HCT116 (cell line): ENCODE measurements at regions of chr22 and their contacts with region 1.

Region 1: GRCh38 chr22:44080936-44081861 is 57.1 kb downstream of the PARVB start:
- DNase-seq: peak; percentile 29
- ATAC-seq: peak; percentile 77
- H3K4me3 ChIP-seq: no peak overlapping the region
- H3K27ac ChIP-seq: no peak overlapping the region
- H3K4me1 ChIP-seq: no peaks in the 10 kb centered on the region; a peak in 1 of 4 replicates
- H3K27me3 ChIP-seq: no peaks in the 10 kb centered on the region
- CTCF ChIP-seq: peak; percentile 46 to 93 (median 91); a peak in 5 of 6 replicates
- POLR2A ChIP-seq: no peak
- RAD21 ChIP-seq: peak; percentile 66

Region 2: GRCh38 chr22:43600265-43600664 is 480.9 kb before region 1 on chr22:
- CTCF ChIA-PET with region 1: no interaction called
- POLR2A ChIA-PET with region 1: no interaction called
- RAD21 ChIA-PET with region 1: no interaction called
- intact Hi-C with region 1: no loop called
- DNase-seq: no peak
- ATAC-seq: no peak
- H3K4me3 ChIP-seq: no peak overlapping the region
- H3K27ac ChIP-seq: no peak overlapping the region
- H3K4me1 ChIP-seq: no peaks in the 10 kb centered on the region
- H3K27me3 ChIP-seq: peaks cover 48% of the 10 kb centered on the region; the same call in 1 of the 2 replicates
- CTCF ChIP-seq: no peak
- POLR2A ChIP-seq: no peak
- RAD21 ChIP-seq: no peak

Region 3: GRCh38 chr22:43993027-43993760 is 88.0 kb before region 1 on chr22:
- CTCF ChIA-PET with region 1: interaction called, 84 read pairs
- POLR2A ChIA-PET with region 1: interaction called, 9 read pairs
- RAD21 ChIA-PET with region 1: interaction called, 9 to 13 read pairs
- intact Hi-C with region 1: loop called (anchors 1 kb)
- DNase-seq: peak; percentile 21
- ATAC-seq: peak; percentile 94
- H3K4me3 ChIP-seq: no peak overlapping the region
- H3K27ac ChIP-seq: 0 out of 2 replicates have a peak overlapping the region, but pooled peaks have one; percentile 29
- H3K4me1 ChIP-seq: no peaks in the 10 kb centered on the region
- H3K27me3 ChIP-seq: no peaks in the 10 kb centered on the region
- CTCF ChIP-seq: peak; percentile 68 to 99 (median 94)
- POLR2A ChIP-seq: no peak
- RAD21 ChIP-seq: peak; percentile 79